Right ventricle myocardium inferior (tissue), 1 donor: ENCODE measurements at regions of chr1 and their contacts with region 1.

Region 1: DNA sequence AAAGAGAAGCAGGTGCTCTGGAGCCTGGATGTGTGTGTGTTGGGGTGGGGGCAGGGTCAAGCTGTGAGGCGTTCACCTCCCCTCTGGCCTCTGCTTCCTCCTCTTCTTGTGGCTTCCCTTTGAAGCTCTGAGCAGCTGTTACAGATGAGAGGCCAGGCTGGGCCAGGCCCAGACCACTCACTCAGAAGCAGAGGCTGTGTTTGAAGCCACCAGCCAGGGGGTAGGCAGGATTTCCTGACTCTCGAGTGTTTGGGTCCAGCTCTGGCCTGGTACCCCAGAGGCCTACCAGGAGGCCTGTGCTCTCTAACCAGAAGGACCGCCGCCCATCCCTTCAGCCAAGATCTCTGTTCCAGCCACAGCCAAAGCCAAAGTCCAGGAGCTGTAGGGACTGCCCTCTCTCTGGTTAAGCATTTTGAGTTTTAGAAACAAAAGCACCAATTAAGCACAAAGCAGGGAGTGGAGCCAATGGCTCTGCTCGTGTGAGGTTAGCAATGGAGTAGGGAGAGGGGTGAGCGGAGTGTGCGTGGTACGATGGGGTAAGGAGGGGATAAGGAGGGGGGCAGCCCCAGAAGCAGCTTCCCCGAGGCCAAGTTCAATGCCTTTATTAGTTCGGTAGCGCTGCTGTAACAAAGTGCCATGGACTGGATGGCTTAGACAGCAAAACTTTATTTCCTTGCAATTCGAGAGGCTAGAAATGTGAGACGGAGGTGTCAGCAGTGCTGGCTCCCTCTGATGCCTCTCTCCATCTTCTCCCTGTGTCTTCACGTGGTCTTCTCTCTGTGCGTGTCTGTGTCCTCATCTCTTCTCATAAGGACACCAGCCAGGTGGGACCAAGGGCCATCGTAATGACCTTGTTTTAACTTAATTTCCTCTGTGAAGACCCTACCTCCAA is 20.5 kb downstream of the RCSD1 start:
- DNase-seq: peak; percentile 79
- ATAC-seq: peak; percentile 45

Region 2: DNA sequence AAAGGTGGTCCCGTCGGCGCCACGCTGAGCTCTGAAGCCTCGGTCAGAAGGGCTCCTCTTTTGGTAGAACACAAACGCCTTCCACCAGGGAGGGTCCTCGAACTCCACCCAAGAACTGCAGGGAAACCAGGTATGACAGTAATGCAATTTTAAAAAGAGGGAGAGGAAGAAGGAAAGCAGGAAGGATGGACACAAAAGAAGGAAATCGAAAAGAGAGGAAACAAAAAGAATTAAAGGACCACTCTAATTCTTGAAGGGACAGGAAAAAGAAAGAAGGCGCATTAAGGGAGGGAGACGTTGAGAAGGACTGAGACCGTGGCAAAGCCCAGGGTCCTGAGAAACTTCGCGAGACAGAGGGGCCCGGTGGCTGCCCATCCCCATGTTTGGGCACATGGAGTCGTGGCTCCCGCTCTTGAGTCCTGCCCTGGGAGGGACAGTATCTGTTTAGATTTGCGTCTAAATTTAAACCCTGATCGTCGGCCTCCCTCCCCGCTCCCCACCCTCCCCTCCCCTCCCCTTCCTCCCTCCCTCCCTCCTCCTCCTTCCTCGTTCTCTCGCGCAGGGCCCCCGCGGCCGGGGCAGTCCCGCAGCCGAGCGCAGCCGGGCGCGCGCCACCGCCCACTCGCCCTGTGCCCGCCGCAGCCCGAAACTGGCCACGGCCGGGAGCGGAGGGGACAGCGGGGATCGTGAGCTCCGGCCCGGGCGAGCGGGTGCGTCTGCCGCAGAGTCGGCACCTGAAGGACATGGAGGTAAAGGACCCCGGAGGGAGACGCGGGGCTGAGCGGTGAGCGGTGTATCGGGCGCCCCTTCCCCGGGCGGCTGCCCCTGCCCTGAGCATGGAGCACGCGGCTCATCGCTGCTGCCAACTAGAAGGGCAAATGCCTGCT is 20.6 kb before region 1 on chr1 and contains the start of gene RCSD1:
- intact Hi-C with region 1: loop called (anchors 2 kb)
- DNase-seq: peak; percentile 89
- ATAC-seq: peak; percentile 79
- total RNA-seq, gene RCSD1: 41.6 TPM

Region 3: GRCh38 chr1:167934426-167935215 is 284.1 kb after region 1 on chr1:
- intact Hi-C with region 1: no loop called
- DNase-seq: no peak
- ATAC-seq: no peak